AG04449 (cell line): ENCODE measurements at regions of chr7 and their contacts with region 1.

Region 1: GRCh38 chr7:31782411-31782991 is 95.5 kb downstream of the PPP1R17 start:
- DNase-seq: no peak
- H3K4me3 ChIP-seq: no peak overlapping the region
- CTCF ChIP-seq: peak; percentile 52

Region 2: GRCh38 chr7:31705377-31705776 is 77.1 kb before region 1 on chr7:
- CTCF ChIA-PET with region 1: no interaction called
- POLR2A ChIA-PET with region 1: no interaction called
- DNase-seq: no peak
- H3K4me3 ChIP-seq: no peak overlapping the region
- CTCF ChIP-seq: no peak

Region 3: DNA sequence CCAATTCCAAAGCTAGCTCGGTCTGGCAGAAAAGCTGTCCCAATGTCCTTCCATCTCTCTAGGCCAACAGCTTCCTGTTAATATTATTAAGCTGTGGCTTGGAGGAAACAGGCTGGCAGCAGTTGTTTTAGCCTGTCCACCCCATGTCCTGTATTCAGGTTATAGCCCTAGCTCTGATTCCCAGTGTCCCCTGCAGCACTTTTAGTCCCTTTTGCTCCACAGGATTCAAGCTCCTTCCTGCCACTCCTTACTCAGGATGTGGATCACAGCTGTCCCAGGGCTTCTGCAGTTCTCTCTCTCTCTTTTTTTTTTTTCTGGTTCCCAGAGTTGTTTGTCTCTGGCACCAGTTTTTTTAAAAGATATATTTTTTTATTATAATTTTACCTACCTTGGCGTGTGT is 10.3 kb before region 1 on chr7:
- CTCF ChIA-PET with region 1: interaction called, 18 read pairs
- POLR2A ChIA-PET with region 1: no interaction called
- DNase-seq: no peak
- H3K4me3 ChIP-seq: no peak overlapping the region
- CTCF ChIP-seq: no peak

Region 4: GRCh38 chr7:32588657-32589056 is 806.2 kb after region 1 on chr7:
- CTCF ChIA-PET with region 1: no interaction called
- POLR2A ChIA-PET with region 1: no interaction called
- DNase-seq: peak; percentile 41
- H3K4me3 ChIP-seq: no peak overlapping the region
- CTCF ChIP-seq: no peak